ACHN (cell line): ENCODE measurements at regions of chr11 and their contacts with region 1.

Region 1: DNA sequence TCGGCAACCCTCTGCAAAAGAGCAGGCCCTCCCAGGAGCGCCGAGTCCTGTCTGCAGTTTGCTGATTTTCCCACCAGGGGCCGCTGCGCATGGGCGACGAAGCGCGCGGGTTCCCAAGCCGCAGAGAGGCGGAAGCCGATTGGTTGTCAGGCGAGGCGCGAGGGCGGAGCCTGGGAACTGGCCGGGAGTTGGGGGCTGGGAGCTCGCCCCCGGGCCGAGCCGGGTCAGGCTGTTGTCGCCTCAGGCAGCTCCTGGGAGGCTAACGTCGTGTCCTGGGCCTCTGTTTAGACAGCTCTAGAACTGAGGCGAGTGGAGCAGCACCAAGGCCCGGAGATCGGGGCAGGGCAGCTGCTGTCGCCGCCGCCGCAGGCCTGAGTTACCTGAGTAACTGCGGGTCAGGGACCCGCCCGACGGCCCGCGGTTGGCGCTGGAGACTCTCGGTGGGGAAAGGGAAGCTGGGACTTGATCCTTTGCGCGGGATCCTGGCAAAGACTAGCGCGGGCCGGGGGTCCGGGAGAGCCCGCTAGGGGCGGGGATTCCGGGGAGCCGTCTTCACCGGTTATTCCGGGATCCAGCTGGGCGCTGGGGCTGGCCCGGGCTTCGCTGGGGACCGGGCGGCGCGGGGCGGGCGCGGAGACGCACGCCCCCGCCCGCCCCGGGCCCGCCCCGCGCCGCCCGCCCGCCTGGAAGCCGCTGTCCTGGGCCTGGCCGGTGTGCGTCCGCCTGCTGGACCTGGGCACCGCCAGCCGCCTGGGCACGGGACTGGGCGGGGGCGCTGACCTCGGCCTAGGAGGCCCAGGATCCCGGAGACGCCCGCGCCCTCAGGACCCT is at the start of gene STIM1:
- DNase-seq: peak; percentile 91

Region 2: DNA sequence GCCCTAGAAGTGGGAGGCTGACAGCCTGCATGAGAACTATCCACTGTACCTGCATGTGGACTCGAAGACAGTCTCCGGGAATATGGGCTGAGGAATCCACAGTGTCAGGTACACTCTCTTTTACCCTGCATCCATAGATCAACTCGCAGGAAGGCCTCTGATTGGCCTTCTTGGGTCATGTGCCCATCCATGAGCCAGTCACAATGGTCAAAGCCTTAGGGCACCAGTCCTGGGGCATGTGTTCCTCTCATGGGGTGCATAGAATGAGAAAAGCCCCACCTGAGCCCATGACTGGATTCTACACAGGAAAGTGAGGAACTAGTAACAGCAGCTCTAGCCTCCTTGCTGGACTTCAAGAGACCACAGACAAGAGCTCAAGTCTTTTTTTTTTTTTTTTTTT is 199.6 kb before region 1 on chr11:
- in situ Hi-C with region 1: no loop called
- DNase-seq: no peak

Region 3: GRCh38 chr11:3723014-3723708 is 132.0 kb before region 1 on chr11:
- in situ Hi-C with region 1: no loop called
- DNase-seq: peak; percentile 59

Region 4: DNA sequence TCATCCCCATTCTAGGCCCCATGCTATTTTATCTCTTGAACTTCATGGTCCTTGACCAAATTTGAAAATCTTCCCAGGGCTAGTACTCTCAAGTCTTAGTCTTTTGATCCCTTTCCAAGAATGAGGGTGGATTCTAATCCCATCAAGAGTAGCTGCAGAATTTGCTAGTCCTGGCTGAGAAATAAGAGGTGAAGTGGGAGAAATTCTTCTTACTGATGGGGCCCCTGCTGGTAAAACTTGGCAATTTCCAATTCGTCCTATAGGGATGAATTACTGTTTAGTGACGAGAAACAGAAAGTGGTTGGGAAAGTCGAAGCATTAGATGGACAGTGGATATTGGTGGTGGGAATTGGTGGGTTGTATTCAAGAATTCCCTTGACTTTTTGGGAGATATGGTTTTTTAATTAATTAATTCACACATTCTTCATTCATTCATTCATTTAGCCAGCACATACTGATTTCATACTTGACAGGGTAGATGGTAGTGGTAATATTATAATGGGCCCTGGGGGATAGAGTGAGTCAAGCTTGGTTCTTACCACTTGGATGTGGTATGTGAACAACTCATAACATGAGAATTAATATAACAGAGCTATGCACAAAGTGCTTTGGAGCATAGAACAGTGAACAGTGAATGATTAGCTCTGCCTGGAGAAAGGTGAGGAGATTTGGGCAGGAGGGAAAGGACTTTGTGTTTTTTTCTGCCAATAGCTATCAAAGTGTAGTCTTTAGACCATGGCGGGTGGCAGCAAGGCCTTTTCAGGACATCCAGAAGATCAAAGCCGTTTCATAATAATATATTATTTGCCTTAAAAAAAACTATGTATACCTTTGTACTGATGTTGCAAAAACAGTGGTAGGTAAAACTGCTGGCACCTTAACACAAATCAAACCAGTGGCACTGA is 104.1 kb after region 1 on chr11:
- in situ Hi-C with region 1: loop called (anchors 25 kb)
- DNase-seq: peak; percentile 93

Region 5: DNA sequence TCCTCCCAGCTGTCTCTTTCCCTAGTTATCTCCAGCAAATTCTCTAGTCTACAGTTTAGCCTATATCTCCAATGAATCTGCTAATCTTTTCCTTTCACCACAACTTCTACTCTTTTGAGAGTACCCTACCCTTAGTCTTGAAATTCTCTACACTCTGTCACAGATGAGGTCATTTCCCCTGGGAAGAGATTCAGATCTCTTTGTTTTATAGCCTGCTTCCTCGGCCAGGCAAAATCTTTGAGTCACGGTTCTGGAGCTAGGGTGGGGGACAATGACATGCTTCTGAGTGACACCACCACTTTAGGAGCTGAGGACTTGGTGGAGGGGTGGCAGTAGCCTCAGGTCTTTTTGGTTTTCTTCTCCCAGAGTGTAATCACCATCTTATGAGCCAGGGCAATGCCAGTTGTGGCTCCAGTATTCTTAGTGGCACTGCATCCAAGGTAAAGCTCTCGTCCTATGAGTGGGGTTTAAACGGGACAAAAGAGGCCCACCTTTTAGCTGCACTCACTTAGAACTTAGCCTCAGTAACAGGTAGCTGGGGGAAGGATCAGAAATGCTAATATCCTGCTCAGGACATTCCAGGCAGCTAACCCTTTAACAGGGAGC is 140.9 kb after region 1 on chr11:
- in situ Hi-C with region 1: no loop called
- DNase-seq: no peak

Region 6: DNA sequence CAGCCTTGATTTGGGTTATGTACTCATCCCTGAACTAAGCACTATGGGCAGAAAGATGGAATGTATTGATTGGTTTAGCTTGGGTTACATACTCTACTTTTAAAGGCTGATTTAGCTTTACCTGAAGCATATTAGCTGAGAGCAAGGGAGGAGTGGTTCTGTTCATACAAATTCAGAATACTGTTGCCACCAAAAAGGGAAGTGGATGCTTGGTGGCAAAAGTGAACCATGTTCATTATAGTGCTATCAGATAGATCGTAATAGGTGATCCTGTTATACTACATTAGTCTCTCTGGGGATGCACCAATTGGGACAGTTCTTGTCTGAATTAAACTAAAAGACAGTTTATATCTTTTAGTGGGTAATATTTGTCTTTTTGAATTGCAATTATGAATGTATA is 194.9 kb after region 1 on chr11:
- in situ Hi-C with region 1: loop called (anchors 10 kb)
- DNase-seq: no peak